Gastrocnemius medialis (tissue), 4 donors: ENCODE measurements at regions of chr11 and their contacts with region 1.

Region 1: GRCh38 chr11:73218106-73218829 is at the start of gene P2RY2:
- DNase-seq: peak; percentile 74 to 93
- ATAC-seq: peak; percentile 47 to 70
- H3K4me3 ChIP-seq: peak within 1 kb of the TSS; percentile 62 to 78 (median 70)
- H3K27ac ChIP-seq: peak within 1 kb of the TSS; percentile 85 to 97 (median 94)
- H3K4me1 ChIP-seq: peaks cover 72 to 85% of the 10 kb centered on the region in 2 donors
- H3K27me3 ChIP-seq: no peaks in the 10 kb centered on the region
- CTCF ChIP-seq: peak; percentile 64 to 79 (median 69)
- POLR2A ChIP-seq: peak; percentile 88 to 91
- total RNA-seq, gene P2RY2: 21.8 to 52.6 (median 44.5) TPM

Region 2: DNA sequence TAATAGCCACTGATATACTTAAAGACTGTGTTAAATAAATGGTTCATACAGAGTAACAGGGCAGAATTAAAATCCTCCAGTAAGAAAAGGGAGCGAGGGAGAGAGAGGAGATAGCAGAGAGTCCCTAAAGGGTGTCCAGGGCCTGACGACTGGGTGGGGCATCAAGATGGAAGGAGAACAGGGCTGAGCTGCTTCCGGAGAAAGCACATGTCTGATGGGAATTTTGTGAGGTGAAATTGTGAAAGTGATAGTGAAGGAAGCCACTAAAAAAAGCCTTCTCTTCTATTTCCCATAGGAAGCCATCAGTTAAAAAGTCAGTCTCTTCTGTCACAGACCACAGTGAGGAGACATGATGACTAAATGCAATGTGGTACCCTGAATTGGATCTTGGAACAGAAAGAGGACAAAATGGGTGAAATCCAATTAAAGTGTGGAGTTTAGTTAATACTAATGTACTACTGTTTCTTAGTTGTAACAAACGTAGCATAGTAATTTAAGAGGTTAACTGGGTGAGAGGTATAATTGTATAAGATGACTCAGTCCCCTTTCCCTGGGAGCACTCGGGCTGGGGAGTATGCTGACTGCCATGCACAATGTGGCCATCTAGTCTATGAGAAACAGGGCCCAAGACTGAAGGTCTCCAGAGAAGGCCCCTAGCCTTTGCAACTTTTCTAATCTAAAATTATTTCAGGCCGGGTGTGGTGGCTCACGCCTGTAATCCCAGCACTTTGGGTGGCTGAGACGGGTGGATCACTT is 46.7 kb before region 1 on chr11:
- in situ Hi-C with region 1: no loop called
- intact Hi-C with region 1: loop called (anchors 1 kb)
- DNase-seq: peak in 1 of 2 donors; percentile 5
- ATAC-seq: no peak
- H3K4me3 ChIP-seq: no peak overlapping the region
- H3K27ac ChIP-seq: peak overlapping the region in 3 of 4 donors; percentile 18 to 33 (median 29)
- H3K4me1 ChIP-seq: peaks cover 17 to 19% of the 10 kb centered on the region in 2 donors
- H3K27me3 ChIP-seq: no peaks in the 10 kb centered on the region
- CTCF ChIP-seq: no peak
- POLR2A ChIP-seq: no peak

Region 3: GRCh38 chr11:73236854-73237253 is 18.6 kb after region 1 on chr11:
- in situ Hi-C with region 1: no loop called
- intact Hi-C with region 1: loop called (anchors 1 kb)
- DNase-seq: peak; percentile 64 to 91
- ATAC-seq: peak; percentile 39 to 42
- H3K4me3 ChIP-seq: no peak overlapping the region
- H3K27ac ChIP-seq: peak overlapping the region; percentile 92 to 98 (median 96)
- H3K4me1 ChIP-seq: peaks cover 62 to 81% of the 10 kb centered on the region in 2 donors
- H3K27me3 ChIP-seq: no peaks in the 10 kb centered on the region
- CTCF ChIP-seq: peak; percentile 59 to 74 (median 63)
- POLR2A ChIP-seq: no peak